ENCODE measurements at regions of chr7 and their contacts with region 1.

Region 1: DNA sequence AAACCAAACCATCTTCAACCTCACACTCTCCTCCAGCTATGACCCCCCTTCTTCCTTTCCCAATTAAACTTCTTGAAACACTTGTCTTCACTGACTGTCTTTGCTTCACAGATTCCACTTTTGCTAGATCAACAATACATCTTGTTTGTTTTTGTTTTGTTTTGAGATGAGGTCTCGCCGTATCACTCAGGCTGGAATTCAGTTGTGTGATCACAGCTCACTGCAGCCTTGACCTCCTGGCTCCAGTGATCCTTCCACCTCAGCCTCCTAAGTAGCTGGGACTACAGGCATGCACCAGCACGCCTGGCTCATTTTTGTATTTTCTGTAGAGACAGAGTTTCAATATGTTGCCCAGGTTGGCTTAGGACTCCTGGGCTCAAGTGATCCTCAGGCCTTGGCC is 59.7 kb downstream of the HIP1 start:
- DNase-seq: no peak
- H3K4me3 ChIP-seq: no peak overlapping the region
- H3K27ac ChIP-seq: no peak overlapping the region
- H3K4me1 ChIP-seq: no peaks in the 10 kb centered on the region
- H3K27me3 ChIP-seq: no peaks in the 10 kb centered on the region
- CTCF ChIP-seq: no peak

Region 2: GRCh38 chr7:75559355-75559975 is 119.6 kb before region 1 on chr7:
- CTCF ChIA-PET with region 1: no interaction called
- POLR2A ChIA-PET with region 1: no interaction called
- intact Hi-C with region 1: no loop called
- DNase-seq: no peak
- H3K4me3 ChIP-seq: no peak overlapping the region
- H3K27ac ChIP-seq: no peak overlapping the region
- H3K4me1 ChIP-seq: no peaks in the 10 kb centered on the region
- H3K27me3 ChIP-seq: no peaks in the 10 kb centered on the region
- CTCF ChIP-seq: no peak

Region 3: DNA sequence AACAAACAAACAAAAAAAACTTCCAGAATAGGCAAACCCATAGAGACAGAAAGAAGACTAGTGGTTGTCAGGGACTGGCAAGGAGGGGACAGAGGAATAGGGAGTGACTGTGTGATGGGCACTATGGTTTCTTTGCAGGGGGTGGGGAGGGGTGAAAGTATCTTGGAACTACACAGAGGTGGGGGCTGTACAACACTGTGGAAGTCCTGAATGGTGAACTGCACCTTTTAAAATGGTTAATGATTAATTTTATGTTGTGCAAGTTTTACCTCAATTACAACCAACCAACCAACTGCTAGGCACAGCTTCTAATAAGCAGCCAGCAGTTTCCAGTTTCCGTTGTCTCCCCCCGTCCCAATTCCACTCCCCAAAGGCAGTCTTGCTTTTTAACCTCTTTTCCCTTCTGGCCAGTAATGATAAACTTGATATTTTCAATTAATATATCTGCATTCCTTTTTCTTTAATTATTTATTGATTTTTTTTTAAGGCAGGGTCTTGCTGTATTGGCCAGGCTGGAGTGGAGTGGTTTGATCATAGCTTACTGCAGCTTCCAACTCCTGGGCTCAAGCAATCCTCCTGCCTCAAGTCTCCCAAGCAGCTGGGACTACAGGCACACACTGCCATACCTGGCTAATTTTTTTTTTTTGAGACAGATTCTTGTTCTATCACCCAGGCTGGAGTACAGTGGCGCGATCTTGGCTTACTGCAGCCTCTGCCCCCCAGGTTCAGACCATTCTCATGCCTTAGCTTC is 12.9 kb after region 1 on chr7:
- CTCF ChIA-PET with region 1: interaction called, 10 read pairs
- POLR2A ChIA-PET with region 1: no interaction called
- intact Hi-C with region 1: no loop called
- DNase-seq: no peak
- H3K4me3 ChIP-seq: no peak overlapping the region
- H3K27ac ChIP-seq: no peak overlapping the region
- H3K4me1 ChIP-seq: peaks cover 8% of the 10 kb centered on the region
- H3K27me3 ChIP-seq: no peaks in the 10 kb centered on the region
- CTCF ChIP-seq: no peak

Region 4: GRCh38 chr7:75711656-75712514 is 32.8 kb after region 1 on chr7:
- CTCF ChIA-PET with region 1: no interaction called
- POLR2A ChIA-PET with region 1: no interaction called
- intact Hi-C with region 1: no loop called
- DNase-seq: no peak
- H3K4me3 ChIP-seq: no peak overlapping the region
- H3K27ac ChIP-seq: no peak overlapping the region
- H3K4me1 ChIP-seq: no peaks in the 10 kb centered on the region
- H3K27me3 ChIP-seq: no peaks in the 10 kb centered on the region
- CTCF ChIP-seq: no peak

Measured in A673 (cell line).